T-cell (primary cell): ENCODE measurements at regions of chr6 and their contacts with region 1.

Region 1: DNA sequence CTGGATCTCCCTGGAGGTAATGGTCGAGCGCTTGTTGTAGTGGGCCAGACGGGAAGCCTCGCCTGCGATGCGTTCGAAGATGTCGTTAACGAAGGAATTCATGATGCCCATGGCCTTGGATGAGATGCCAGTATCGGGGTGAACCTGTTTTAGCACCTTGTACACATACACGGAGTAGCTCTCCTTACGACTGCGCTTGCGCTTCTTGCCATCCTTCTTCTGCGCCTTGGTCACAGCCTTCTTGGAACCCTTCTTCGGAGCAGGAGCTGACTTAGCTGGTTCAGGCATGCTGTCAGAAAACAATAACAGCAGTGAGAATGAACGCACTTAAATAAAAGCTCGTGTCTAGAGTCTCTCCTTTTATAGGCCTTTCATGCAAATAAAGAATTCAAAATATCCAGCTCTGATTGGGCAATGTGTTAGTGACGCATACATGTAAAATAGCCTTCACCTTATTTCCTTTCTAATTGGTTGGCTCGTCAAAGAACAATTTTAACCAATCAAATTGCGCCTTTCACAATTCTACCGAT is 129.2 kb downstream of the HFE start:
- DNase-seq: peak; percentile 56 to 93 (median 76)
- ATAC-seq: peak; percentile 77 to 87 (median 83)
- H3K4me3 ChIP-seq: peak overlapping the region; percentile 73 to 91
- H3K4me3 Mint-ChIP-seq: no peak overlapping the region
- H3K27ac ChIP-seq: peak overlapping the region; percentile 94
- H3K27ac Mint-ChIP-seq: no peak overlapping the region
- H3K4me1 ChIP-seq: peaks cover 13 to 32% of the 10 kb centered on the region in 2 experiments
- H3K4me1 Mint-ChIP-seq: peaks cover 0 to 8% (median 5%) of the 10 kb centered on the region in 3 donors
- H3K27me3 ChIP-seq: no peaks in the 10 kb centered on the region
- H3K27me3 Mint-ChIP-seq: no peaks in the 10 kb centered on the region

Region 2: GRCh38 chr6:25927756-25928216 is 288.6 kb before region 1 on chr6:
- CTCF ChIA-PET with region 1: no interaction called
- POLR2A ChIA-PET with region 1: no interaction called
- DNase-seq: no peak
- ATAC-seq: no peak
- H3K4me3 ChIP-seq: no peak overlapping the region
- H3K4me3 Mint-ChIP-seq: no peak overlapping the region
- H3K27ac ChIP-seq: no peak overlapping the region
- H3K27ac Mint-ChIP-seq: no peak overlapping the region
- H3K4me1 ChIP-seq: no peaks in the 10 kb centered on the region
- H3K4me1 Mint-ChIP-seq: no peaks in the 10 kb centered on the region
- H3K27me3 ChIP-seq: no peaks in the 10 kb centered on the region
- H3K27me3 Mint-ChIP-seq: peaks cover 3% of the 10 kb centered on the region in 2 donors

Region 3: DNA sequence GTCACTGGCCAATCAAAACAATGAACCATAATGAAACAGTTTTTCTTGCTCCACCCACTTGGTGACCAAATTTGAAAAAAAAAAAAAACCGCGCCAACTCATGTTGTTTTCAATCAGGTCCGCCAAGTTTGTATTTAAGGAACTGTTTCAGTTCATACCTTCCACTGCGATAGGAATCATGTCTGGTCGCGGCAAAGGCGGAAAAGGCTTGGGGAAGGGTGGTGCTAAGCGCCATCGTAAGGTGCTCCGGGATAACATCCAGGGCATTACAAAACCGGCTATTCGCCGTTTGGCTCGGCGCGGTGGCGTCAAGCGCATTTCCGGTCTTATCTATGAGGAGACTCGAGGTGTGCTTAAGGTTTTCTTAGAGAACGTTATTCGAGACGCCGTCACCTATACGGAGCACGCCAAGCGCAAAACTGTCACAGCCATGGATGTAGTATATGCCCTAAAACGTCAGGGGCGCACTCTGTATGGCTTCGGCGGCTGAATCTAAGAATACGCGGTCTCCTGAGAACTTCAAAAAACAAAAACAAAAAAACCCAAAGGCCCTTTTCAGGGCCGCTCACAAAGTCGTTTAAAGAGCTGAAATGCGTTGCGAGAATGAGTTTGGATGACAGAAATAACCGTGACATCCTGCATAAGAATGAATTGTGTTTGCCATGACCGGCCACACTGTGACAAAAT is 112.5 kb before region 1 on chr6:
- CTCF ChIA-PET with region 1: interaction called in 1 of 2 experiments, 4 read pairs
- POLR2A ChIA-PET with region 1: interaction called in 1 of 2 experiments, 10 read pairs
- DNase-seq: peak; percentile 82 to 95 (median 89)
- ATAC-seq: peak; percentile 87 to 92 (median 90)
- H3K4me3 ChIP-seq: peak overlapping the region; percentile 40 to 68
- H3K4me3 Mint-ChIP-seq: peak overlapping the region; percentile 78 to 91 (median 89)
- H3K27ac ChIP-seq: peak overlapping the region; percentile 85
- H3K27ac Mint-ChIP-seq: peak overlapping the region; percentile 96 to 99
- H3K4me1 ChIP-seq: peaks cover 7 to 12% of the 10 kb centered on the region in 2 experiments
- H3K4me1 Mint-ChIP-seq: peaks cover 15 to 18% (median 16%) of the 10 kb centered on the region in 3 donors
- H3K27me3 ChIP-seq: peaks cover 0 to 4% of the 10 kb centered on the region in 2 experiments
- H3K27me3 Mint-ChIP-seq: peaks cover 0 to 3% of the 10 kb centered on the region in 2 donors

Region 4: DNA sequence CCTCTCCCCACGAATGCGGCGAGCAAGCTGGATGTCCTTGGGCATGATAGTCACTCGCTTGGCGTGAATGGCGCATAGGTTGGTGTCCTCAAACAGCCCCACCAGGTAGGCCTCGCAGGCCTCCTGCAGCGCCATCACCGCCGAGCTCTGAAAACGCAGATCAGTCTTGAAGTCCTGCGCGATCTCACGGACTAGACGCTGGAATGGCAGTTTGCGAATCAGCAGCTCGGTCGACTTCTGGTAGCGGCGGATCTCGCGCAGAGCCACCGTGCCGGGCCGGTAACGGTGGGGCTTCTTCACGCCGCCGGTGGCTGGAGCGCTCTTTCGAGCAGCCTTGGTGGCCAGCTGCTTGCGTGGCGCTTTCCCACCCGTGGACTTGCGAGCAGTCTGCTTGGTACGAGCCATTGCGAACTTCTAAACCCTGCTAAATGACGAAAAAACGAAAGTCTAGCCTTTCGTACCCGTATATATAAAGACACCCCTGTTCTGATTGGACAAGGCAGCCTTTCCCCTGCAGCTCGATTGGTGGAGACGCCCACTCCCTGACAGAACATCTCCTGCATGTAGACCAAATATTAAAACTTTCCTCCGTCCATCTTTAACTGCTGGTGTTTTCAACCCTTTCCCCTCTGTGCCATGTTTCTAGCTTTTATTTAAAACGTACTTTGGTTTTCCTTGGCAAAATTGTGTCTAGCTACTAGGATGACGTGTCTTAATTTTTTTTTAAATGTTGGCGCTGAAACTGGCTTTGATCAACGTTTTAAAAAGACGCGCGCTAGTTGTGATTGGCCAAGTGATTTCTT is 19.4 kb before region 1 on chr6:
- CTCF ChIA-PET with region 1: interaction called, 4 to 73 read pairs
- POLR2A ChIA-PET with region 1: interaction called, 145 to 526 read pairs
- DNase-seq: peak; percentile 55 to 93 (median 81)
- ATAC-seq: peak; percentile 58 to 66 (median 61)
- H3K4me3 ChIP-seq: peak overlapping the region; percentile 79 to 99
- H3K4me3 Mint-ChIP-seq: peak overlapping the region; percentile 95 to 98 (median 97)
- H3K27ac ChIP-seq: peak overlapping the region; percentile 85
- H3K27ac Mint-ChIP-seq: peak overlapping the region; percentile 93 to 98
- H3K4me1 ChIP-seq: peaks cover 13 to 30% of the 10 kb centered on the region in 2 experiments
- H3K4me1 Mint-ChIP-seq: peaks cover 38 to 60% (median 46%) of the 10 kb centered on the region in 3 donors
- H3K27me3 ChIP-seq: no peaks in the 10 kb centered on the region
- H3K27me3 Mint-ChIP-seq: no peaks in the 10 kb centered on the region

Region 5: GRCh38 chr6:26240154-26241032 is 24.0 kb after region 1 on chr6:
- CTCF ChIA-PET with region 1: interaction called in 1 of 2 experiments, 32 read pairs
- POLR2A ChIA-PET with region 1: interaction called, 67 to 199 read pairs
- DNase-seq: peak; percentile 55 to 85 (median 65)
- ATAC-seq: peak; percentile 78 to 84 (median 82)
- H3K4me3 ChIP-seq: peak overlapping the region; percentile 68 to 92
- H3K4me3 Mint-ChIP-seq: peak overlapping the region; percentile 82 to 97 (median 82)
- H3K27ac ChIP-seq: peak overlapping the region; percentile 96
- H3K27ac Mint-ChIP-seq: peak overlapping the region; percentile 90 to 92
- H3K4me1 ChIP-seq: peaks cover 7 to 17% of the 10 kb centered on the region in 2 experiments
- H3K4me1 Mint-ChIP-seq: peaks cover 23 to 27% (median 24%) of the 10 kb centered on the region in 3 donors
- H3K27me3 ChIP-seq: no peaks in the 10 kb centered on the region
- H3K27me3 Mint-ChIP-seq: no peaks in the 10 kb centered on the region

Region 6: DNA sequence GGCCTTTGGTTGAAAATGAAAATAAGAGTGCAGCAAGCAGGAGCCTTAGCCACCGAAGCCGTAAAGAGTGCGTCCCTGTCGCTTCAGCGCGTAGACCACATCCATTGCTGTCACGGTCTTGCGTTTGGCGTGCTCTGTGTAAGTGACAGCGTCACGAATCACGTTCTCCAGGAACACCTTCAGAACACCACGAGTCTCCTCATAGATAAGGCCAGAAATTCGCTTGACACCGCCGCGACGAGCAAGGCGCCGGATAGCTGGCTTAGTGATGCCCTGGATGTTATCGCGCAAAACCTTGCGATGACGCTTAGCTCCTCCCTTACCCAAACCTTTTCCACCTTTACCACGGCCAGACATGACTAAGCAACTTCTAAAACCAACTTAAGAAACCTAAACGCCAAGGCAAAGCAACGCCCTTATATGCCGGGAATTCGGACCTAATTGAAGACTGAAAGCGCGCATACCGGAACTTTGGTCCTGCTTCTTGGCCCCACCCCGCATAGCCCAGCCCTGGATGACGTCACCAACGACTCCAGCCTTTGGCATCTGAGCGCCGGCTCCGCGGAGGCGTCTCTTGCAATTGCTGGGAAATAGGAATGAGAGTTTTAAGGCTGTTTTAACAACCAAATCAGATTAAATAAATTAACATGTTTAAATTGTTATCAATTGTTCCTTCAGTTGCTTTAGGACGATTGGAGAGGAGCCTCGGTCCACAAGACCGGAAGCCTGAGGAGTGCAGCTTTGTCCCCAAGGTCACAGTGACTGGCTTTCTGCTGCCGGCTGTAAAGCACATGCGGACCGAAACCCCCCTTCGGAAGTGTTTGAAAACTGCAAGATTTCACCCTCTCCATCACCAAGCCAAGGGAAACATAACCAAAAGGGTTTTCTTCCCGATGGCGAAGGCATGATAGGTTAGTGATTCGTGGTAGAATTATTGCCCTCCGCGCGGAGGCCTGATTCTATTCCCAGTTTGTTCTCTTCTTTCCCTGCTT is 69.0 kb after region 1 on chr6:
- CTCF ChIA-PET with region 1: interaction called in 1 of 2 experiments, 5 read pairs
- POLR2A ChIA-PET with region 1: interaction called, 14 to 43 read pairs
- DNase-seq: peak; percentile 86 to 97 (median 91)
- ATAC-seq: peak; percentile 77 to 87 (median 80)
- H3K4me3 ChIP-seq: peak overlapping the region; percentile 50 to 84
- H3K4me3 Mint-ChIP-seq: peak overlapping the region; percentile 84 to 92 (median 88)
- H3K27ac ChIP-seq: peak overlapping the region; percentile 81
- H3K27ac Mint-ChIP-seq: peak overlapping the region; percentile 92 to 93
- H3K4me1 ChIP-seq: peaks cover 14 to 19% of the 10 kb centered on the region in 2 experiments
- H3K4me1 Mint-ChIP-seq: peaks cover 30 to 41% (median 31%) of the 10 kb centered on the region in 3 donors
- H3K27me3 ChIP-seq: no peaks in the 10 kb centered on the region
- H3K27me3 Mint-ChIP-seq: peaks cover 4 to 5% of the 10 kb centered on the region in 2 donors

Region 7: GRCh38 chr6:27081931-27082330 is 865.5 kb after region 1 on chr6:
- CTCF ChIA-PET with region 1: no interaction called
- POLR2A ChIA-PET with region 1: no interaction called
- DNase-seq: no peak
- ATAC-seq: no peak
- H3K4me3 ChIP-seq: no peak overlapping the region
- H3K4me3 Mint-ChIP-seq: no peak overlapping the region
- H3K27ac ChIP-seq: no peak overlapping the region
- H3K27ac Mint-ChIP-seq: no peak overlapping the region
- H3K4me1 ChIP-seq: peaks cover 6 to 7% of the 10 kb centered on the region in 2 experiments
- H3K4me1 Mint-ChIP-seq: peaks cover 3 to 8% (median 6%) of the 10 kb centered on the region in 3 donors
- H3K27me3 ChIP-seq: peaks cover 6 to 8% of the 10 kb centered on the region in 2 experiments
- H3K27me3 Mint-ChIP-seq: peaks cover 45 to 46% of the 10 kb centered on the region in 2 donors

Region 8: DNA sequence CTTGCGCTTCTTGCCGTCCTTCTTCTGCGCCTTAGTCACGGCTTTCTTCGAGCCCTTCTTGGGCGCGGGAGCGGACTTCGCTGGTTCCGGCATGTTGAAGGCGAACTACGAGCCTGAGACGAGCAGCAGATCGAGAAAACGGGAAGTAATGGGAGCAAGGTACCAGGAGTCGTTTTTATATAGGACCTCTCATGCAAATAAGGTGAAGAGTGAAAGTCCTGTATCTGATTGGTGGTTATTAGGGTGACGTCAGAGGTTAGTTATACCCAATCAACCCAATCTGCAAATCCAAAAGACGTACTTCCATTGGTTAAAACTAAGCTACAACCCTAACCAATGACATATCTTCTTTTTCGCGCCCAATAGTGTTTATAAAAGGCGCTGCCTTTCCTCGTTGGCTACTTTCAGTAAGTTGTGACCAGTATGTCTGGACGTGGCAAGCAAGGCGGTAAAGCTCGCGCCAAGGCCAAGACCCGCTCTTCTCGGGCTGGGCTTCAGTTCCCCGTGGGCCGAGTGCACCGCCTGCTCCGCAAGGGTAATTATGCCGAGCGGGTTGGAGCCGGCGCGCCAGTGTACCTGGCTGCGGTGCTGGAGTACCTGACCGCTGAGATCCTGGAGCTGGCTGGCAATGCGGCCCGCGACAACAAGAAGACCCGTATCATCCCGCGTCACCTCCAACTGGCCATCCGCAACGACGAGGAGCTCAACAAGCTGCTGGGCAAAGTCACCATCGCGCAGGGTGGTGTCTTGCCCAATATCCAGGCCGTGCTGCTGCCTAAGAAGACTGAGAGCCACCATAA is 930.5 kb after region 1 on chr6:
- CTCF ChIA-PET with region 1: no interaction called
- POLR2A ChIA-PET with region 1: interaction called, 4 to 20 read pairs
- DNase-seq: peak; percentile 43 to 96 (median 69)
- ATAC-seq: peak; percentile 85 to 88 (median 86)
- H3K4me3 ChIP-seq: peak overlapping the region; percentile 77 to 93
- H3K4me3 Mint-ChIP-seq: no peak overlapping the region
- H3K27ac ChIP-seq: peak overlapping the region; percentile 91
- H3K27ac Mint-ChIP-seq: no peak overlapping the region
- H3K4me1 ChIP-seq: peaks cover 11 to 29% of the 10 kb centered on the region in 2 experiments
- H3K4me1 Mint-ChIP-seq: peaks cover 13 to 20% (median 18%) of the 10 kb centered on the region in 3 donors
- H3K27me3 ChIP-seq: no peaks in the 10 kb centered on the region
- H3K27me3 Mint-ChIP-seq: no peaks in the 10 kb centered on the region